ENCODE measurements at regions of chr14 and their contacts with region 1.

Region 1: DNA sequence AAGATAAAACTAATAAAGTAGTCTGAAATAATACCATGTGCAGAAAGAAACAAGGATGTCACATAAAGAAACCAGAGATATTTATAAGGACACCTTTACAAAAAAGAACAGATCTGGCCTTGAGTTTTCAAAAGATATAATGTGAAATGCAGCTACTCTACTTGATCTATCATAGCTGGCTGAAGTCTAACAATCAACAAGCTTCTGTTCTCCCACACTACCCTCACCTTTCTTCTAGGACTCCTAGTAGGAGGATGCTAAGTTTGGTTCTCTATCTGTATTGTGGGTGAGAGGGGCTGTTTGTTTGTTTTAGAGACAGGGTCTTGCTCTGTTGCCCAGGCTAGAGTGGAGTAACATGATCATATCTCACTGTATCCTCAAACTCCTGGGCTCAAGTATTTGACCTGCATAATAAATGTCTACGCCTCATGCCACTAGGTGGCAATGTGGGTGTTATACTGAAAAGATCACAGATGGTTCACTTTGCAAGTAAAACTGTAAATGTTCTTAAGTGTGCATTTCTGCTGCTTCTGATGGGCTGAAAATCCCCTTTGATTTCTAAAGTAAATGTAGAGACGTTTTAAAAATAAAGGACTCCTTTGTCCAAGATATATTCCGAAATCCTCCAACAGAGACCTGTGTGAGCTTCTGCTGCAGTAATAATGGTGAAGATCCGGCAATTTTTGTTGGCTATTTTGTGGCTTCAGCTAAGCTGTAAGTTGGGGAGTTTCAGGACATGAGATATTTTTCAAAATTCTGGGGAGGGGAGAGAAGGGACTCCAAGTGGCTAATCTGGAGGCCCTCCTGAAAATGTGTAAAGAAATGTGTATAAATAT is 269.3 kb downstream of the DAD1 start:
- DNase-seq: peak; percentile 89
- ATAC-seq: peak; percentile 78
- H3K4me3 ChIP-seq: no peak overlapping the region
- H3K27ac ChIP-seq: no peak overlapping the region
- H3K4me1 ChIP-seq: peaks cover 24% of the 10 kb centered on the region
- H3K27me3 ChIP-seq: no peaks in the 10 kb centered on the region
- CTCF ChIP-seq: peak; percentile 81

Region 2: GRCh38 chr14:21068521-21069387 is 1251.0 kb before region 1 on chr14:
- CTCF ChIA-PET with region 1: no interaction called
- POLR2A ChIA-PET with region 1: no interaction called
- intact Hi-C with region 1: no loop called
- DNase-seq: peak; percentile 61
- ATAC-seq: peak; percentile 59
- H3K4me3 ChIP-seq: peak overlapping the region; percentile 72; the same call in 1 of the 2 replicates
- H3K27ac ChIP-seq: no peak overlapping the region
- H3K4me1 ChIP-seq: peaks cover 6% of the 10 kb centered on the region; the same call in 1 of the 2 replicates
- H3K27me3 ChIP-seq: peaks cover 60% of the 10 kb centered on the region
- CTCF ChIP-seq: peak; percentile 68

Region 3: DNA sequence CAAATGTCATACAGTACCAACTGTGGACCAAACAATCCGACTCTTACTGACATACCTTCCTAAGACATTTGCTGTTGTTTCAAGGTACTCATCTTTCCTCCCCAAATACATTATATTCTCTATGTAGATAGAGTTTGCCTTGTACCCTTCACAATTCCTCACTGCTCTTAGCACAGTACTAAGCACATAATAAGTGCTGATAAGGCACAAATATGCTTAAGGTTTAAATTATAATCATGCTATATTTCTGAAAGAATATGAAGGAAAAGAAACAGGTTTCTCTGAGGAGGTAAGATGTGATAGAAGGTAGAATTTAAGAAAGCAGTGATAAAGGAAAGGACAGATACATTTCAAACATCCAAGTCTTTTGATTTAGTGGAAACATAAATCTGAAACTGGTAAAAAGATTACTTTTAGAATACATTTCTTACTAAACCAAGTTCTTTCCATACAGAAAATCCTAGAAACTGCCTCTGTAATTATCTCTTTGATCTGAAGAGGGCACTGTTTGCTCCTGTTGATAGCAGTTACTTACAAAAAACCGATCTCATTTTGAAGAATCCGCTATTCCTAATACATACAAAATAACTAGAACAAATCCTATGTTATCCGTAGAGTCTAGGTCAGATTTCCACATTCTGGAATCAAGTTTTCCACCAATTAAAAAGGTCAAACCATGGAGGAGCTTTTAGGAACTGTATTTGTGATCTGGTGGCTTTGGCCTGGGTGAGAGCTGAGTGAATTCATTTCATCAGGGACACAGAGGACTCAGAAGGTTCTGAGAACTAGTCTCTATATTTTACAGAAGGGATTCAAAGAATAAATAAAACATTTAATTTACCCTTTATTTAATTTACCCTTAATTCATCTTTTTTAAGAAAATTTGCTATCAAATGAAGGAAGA is 42.6 kb before region 1 on chr14:
- CTCF ChIA-PET with region 1: interaction called, 3 read pairs
- POLR2A ChIA-PET with region 1: no interaction called
- intact Hi-C with region 1: loop called (anchors 1 kb)
- DNase-seq: peak; percentile 74
- ATAC-seq: no peak
- H3K4me3 ChIP-seq: no peak overlapping the region
- H3K27ac ChIP-seq: no peak overlapping the region
- H3K4me1 ChIP-seq: no peaks in the 10 kb centered on the region
- H3K27me3 ChIP-seq: no peaks in the 10 kb centered on the region
- CTCF ChIP-seq: peak; percentile 89

Region 4: GRCh38 chr14:22333422-22334276 is 13.9 kb after region 1 on chr14:
- CTCF ChIA-PET with region 1: interaction called, 11 read pairs
- POLR2A ChIA-PET with region 1: interaction called, 3 read pairs
- intact Hi-C with region 1: no loop called
- DNase-seq: peak; percentile 99
- ATAC-seq: peak; percentile 94
- H3K4me3 ChIP-seq: peak overlapping the region; percentile 62
- H3K27ac ChIP-seq: peak overlapping the region; percentile 90
- H3K4me1 ChIP-seq: peaks cover 31% of the 10 kb centered on the region
- H3K27me3 ChIP-seq: no peaks in the 10 kb centered on the region
- CTCF ChIP-seq: no peak

Region 5: GRCh38 chr14:22375321-22375930 is 55.7 kb after region 1 on chr14:
- CTCF ChIA-PET with region 1: interaction called, 59 read pairs
- POLR2A ChIA-PET with region 1: interaction called, 40 read pairs
- intact Hi-C with region 1: loop called (anchors 1 kb)
- DNase-seq: peak; percentile 87
- ATAC-seq: peak; percentile 56; the same call in 1 of the 2 replicates
- H3K4me3 ChIP-seq: no peak overlapping the region
- H3K27ac ChIP-seq: no peak overlapping the region
- H3K4me1 ChIP-seq: peaks cover 26% of the 10 kb centered on the region
- H3K27me3 ChIP-seq: no peaks in the 10 kb centered on the region
- CTCF ChIP-seq: peak; percentile 85

Region 6: GRCh38 chr14:22472935-22473854 is 153.5 kb after region 1 on chr14:
- CTCF ChIA-PET with region 1: interaction called, 3 read pairs
- POLR2A ChIA-PET with region 1: no interaction called
- intact Hi-C with region 1: loop called (anchors 2 kb)
- DNase-seq: peak; percentile 72
- ATAC-seq: peak; percentile 54
- H3K4me3 ChIP-seq: no peak overlapping the region
- H3K27ac ChIP-seq: no peak overlapping the region
- H3K4me1 ChIP-seq: peaks cover 23% of the 10 kb centered on the region
- H3K27me3 ChIP-seq: no peaks in the 10 kb centered on the region
- CTCF ChIP-seq: peak; percentile 84

Region 7: DNA sequence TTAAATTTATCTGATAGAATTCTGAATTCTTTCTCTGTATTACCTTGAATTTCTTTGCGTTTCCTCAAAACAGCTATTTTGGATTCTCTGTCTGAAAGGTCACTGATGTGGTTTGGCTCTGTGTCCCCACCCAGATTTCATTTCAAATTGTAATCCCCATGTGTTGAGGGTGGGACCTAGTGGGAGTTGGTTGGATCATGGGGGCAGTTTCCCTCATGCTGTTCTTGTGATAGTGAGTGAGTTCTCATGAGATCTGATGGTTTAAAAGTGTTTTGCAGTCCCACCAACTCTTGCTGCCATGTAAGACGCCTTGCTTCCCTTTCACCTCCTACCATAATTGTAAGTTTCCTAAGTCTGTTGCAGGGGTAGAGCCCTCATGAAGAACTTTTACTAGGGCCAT is 358.5 kb after region 1 on chr14:
- CTCF ChIA-PET with region 1: no interaction called
- POLR2A ChIA-PET with region 1: no interaction called
- intact Hi-C with region 1: no loop called
- DNase-seq: no peak
- ATAC-seq: no peak
- H3K4me3 ChIP-seq: no peak overlapping the region
- H3K27ac ChIP-seq: no peak overlapping the region
- H3K4me1 ChIP-seq: no peaks in the 10 kb centered on the region
- H3K27me3 ChIP-seq: peaks cover 22% of the 10 kb centered on the region
- CTCF ChIP-seq: no peak

Measured in PC-3 (cell line).